ENCODE measurements at regions of chr14 and their contacts with region 1.

Region 1: GRCh38 chr14:55094321-55095157 is 34.5 kb upstream of the LGALS3 start:
- DNase-seq: no peak
- H3K4me3 ChIP-seq: no peak overlapping the region
- H3K27me3 ChIP-seq: no peaks in the 10 kb centered on the region
- CTCF ChIP-seq: no peak

Region 2: DNA sequence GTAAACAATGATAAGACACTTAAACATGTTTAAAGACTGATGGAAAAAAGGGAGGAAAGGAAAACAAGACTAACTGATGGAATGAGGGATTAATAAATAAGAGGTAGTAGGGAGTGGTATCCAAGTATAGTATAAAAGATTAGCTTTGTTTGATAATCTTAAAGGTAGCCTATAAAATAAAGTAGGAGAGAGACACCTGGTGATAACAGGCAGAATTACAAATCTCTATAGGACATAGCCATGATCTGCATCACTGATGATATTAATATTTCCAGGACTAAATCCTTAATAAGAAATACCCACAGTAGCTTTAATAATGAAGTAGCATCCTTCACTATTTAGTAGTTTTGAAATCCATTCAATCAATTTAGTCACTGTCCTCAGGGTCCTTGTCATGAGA is 66.5 kb after region 1 on chr14:
- CTCF ChIA-PET with region 1: interaction called, 69 read pairs
- POLR2A ChIA-PET with region 1: no interaction called
- DNase-seq: no peak
- H3K4me3 ChIP-seq: no peak overlapping the region
- H3K27me3 ChIP-seq: no peaks in the 10 kb centered on the region
- CTCF ChIP-seq: peak; percentile 52

Region 3: DNA sequence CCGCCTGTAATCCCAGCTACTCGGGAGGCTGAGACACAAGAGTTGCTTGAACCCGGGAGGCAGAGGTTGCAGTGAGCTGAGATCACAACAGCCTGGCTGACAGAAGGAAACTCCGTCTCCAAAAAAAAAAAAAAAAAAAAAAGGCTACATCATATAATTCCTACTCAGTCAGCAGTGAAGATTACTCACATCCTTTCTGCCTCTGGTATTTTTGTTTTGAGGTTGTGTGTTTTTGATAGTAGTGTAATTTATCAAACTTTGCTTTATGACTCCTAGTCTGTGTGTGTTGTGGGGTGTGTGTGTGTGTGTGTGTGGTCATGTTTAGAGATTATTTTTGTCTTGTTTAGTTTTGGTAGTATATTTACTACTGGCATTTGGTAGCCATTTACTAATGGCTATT is 126.6 kb after region 1 on chr14:
- CTCF ChIA-PET with region 1: no interaction called
- POLR2A ChIA-PET with region 1: no interaction called
- DNase-seq: peak; percentile 17
- H3K4me3 ChIP-seq: no peak overlapping the region
- H3K27me3 ChIP-seq: no peaks in the 10 kb centered on the region
- CTCF ChIP-seq: no peak

Measured in BJ (cell line).